Activated B cell treated with CpG ODN at 0.5 μM for 24 hours (primary cell): ENCODE measurements at regions of chr19 and their contacts with region 1.

Region 1: DNA sequence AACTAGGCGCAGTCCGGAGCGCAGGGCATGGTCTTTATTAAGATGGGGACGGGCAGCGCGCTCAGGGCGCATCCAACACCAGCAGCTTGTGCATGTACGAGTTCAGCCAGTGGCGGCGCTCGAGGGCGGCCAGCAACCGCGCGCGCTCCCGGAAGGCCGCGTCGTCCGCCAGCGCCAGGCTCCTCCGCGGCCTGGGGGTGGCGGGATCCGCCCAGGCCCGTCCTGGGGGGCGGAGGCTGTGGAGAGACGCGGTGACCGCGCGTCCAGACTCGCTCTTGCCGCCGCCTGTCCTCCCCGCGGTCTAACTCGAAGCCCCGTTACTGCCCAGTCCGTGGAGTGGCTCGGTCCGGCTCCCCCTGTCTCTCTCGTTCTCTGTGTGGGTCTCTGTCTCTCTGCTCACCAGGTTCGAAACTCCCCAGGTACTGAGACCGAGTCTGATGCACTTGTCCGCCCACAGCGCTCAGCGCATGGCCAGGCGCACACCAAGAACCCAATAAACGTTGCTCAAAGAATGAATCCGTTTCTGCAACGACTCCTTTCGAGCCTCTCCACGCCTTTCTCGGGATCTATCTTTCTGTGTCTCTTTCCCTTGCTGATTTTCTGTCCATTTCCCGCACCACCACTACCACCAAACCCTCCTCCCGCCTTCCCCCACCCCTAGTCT is 702 bp downstream of the PTH2 start:
- DNase-seq: no peak
- ATAC-seq: peak; percentile 46
- H3K4me3 Mint-ChIP-seq: peak overlapping the region; percentile 77
- H3K27ac Mint-ChIP-seq: no peak overlapping the region
- H3K4me1 Mint-ChIP-seq: peaks cover 57% of the 10 kb centered on the region
- H3K27me3 Mint-ChIP-seq: peaks cover 83% of the 10 kb centered on the region
- CTCF ChIP-seq: no peak

Region 2: GRCh38 chr19:49409441-49410029 is 13.0 kb before region 1 on chr19:
- CTCF ChIA-PET with region 1: no interaction called
- POLR2A ChIA-PET with region 1: interaction called, 4 read pairs
- intact Hi-C with region 1: loop called (anchors 2 kb)
- DNase-seq: no peak
- ATAC-seq: peak; percentile 83
- H3K4me3 Mint-ChIP-seq: peak overlapping the region; percentile 67
- H3K27ac Mint-ChIP-seq: peak overlapping the region; percentile 89
- H3K4me1 Mint-ChIP-seq: peaks cover 56% of the 10 kb centered on the region
- H3K27me3 Mint-ChIP-seq: no peaks in the 10 kb centered on the region
- CTCF ChIP-seq: no peak

Region 3: DNA sequence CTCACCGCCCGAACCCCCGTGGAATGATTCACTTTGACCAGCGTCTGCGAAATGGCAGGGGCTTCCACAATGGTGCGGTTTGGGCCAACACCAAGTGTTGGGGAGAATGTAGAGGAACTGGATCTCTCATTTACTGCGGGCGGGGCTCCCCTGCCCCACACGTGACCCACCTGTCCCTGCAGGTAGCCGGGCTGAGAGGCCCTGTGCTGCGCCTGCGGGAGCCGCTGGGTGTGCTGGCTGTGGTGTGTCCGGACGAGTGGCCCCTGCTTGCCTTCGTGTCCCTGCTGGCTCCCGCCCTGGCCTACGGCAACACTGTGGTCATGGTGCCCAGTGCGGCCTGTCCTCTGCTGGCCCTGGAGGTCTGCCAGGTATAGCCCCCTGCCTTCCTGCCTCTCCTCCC is 45.7 kb after region 1 on chr19:
- CTCF ChIA-PET with region 1: no interaction called
- POLR2A ChIA-PET with region 1: no interaction called
- intact Hi-C with region 1: no loop called
- DNase-seq: no peak
- ATAC-seq: no peak
- H3K4me3 Mint-ChIP-seq: no peak overlapping the region
- H3K27ac Mint-ChIP-seq: peak overlapping the region; percentile 97
- H3K4me1 Mint-ChIP-seq: peaks cover 39% of the 10 kb centered on the region
- H3K27me3 Mint-ChIP-seq: no peaks in the 10 kb centered on the region
- CTCF ChIP-seq: no peak